SK-N-SH (cell line): ENCODE measurements at regions of chr1 and their contacts with region 1.

Region 1: GRCh38 chr1:245858722-245859492 is 648.2 kb downstream of the SMYD3 start:
- DNase-seq: peak; percentile 49
- H3K4me3 ChIP-seq: no peak overlapping the region
- H3K27ac ChIP-seq: peak overlapping the region; percentile 98 to 100
- H3K4me1 ChIP-seq: peaks cover 34 to 52% of the 10 kb centered on the region in 2 experiments
- H3K27me3 ChIP-seq: no peaks in the 10 kb centered on the region
- CTCF ChIP-seq: peak; percentile 67
- EP300 ChIP-seq: no peak
- RAD21 ChIP-seq: peak; percentile 74

Region 2: DNA sequence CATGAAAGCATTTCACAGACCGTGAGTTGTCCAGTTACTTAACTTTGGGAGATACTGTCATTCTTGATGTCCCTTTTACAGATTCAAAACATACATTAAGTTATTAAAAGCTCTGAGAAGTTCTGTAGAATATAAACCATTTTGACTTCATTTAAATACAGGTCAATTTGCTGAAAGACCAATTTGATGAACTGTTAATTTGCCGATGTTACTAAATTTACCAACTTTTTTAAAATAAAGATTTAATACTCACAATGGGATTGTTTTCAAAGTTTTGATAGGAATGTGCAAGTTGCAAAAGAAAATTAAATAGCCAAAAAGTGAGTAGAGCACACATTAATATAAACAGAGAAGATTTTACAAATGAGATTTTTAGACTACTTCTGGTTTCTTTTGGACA is 17.9 kb before region 1 on chr1:
- CTCF ChIA-PET with region 1: interaction called, 10 read pairs
- POLR2A ChIA-PET with region 1: no interaction called
- DNase-seq: no peak
- H3K4me3 ChIP-seq: no peak overlapping the region
- H3K27ac ChIP-seq: no peak overlapping the region
- H3K4me1 ChIP-seq: peaks cover 5 to 8% of the 10 kb centered on the region in 2 experiments; a peak in 3 of 4 replicates
- H3K27me3 ChIP-seq: no peaks in the 10 kb centered on the region
- CTCF ChIP-seq: no peak
- EP300 ChIP-seq: no peak
- RAD21 ChIP-seq: no peak

Region 3: GRCh38 chr1:245869181-245869580 is 10.3 kb after region 1 on chr1:
- CTCF ChIA-PET with region 1: interaction called, 22 read pairs
- POLR2A ChIA-PET with region 1: no interaction called
- DNase-seq: no peak
- H3K4me3 ChIP-seq: no peak overlapping the region
- H3K27ac ChIP-seq: peak overlapping the region in 1 of 2 experiments; percentile 100; a peak in 2 of 4 replicates
- H3K4me1 ChIP-seq: peaks cover 14 to 60% of the 10 kb centered on the region in 2 experiments; a peak in 2 of 4 replicates
- H3K27me3 ChIP-seq: no peaks in the 10 kb centered on the region
- CTCF ChIP-seq: no peak
- EP300 ChIP-seq: no peak
- RAD21 ChIP-seq: no peak

Region 4: GRCh38 chr1:245874942-245875580 is 16.2 kb after region 1 on chr1:
- CTCF ChIA-PET with region 1: interaction called, 22 read pairs
- POLR2A ChIA-PET with region 1: no interaction called
- DNase-seq: peak; percentile 82
- H3K4me3 ChIP-seq: no peak overlapping the region
- H3K27ac ChIP-seq: peak overlapping the region; percentile 96 to 100
- H3K4me1 ChIP-seq: peaks cover 29 to 80% of the 10 kb centered on the region in 2 experiments
- H3K27me3 ChIP-seq: no peaks in the 10 kb centered on the region
- CTCF ChIP-seq: no peak
- EP300 ChIP-seq: peak; percentile 99 to 100
- RAD21 ChIP-seq: peak; percentile 54